ENCODE measurements at regions of chr15 and their contacts with region 1.

Region 1: DNA sequence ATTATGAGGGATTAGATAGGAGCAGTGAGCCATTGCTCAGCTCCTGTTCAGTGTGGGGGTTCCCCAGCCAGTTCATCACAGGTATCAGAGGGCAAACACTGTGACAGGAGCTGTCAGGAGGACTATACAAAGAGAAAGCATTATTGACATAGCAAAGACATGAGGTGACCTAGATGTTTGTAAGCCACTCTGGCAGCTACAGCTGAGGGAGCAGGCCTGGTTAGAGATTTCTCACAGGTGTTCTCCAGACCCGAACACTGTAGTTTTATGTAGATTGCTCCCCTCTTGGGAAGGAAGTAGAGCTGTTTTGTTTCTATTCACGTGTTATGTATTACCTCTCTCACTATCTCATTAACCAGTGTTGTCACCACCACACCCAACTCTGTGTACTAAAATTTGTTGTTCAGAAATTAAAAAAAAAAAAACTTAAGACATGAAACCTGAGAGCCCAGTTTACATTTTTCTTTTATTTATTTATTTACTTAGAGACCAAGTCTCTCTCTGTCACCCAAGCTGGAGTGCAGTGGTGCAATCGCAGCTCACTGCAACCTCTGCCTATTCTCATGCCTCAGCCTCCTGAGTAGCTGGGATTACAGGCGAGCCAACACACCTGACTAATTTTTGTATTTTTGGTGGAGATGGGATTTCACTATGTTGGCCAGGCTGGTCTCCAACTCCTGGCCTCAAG is 123.7 kb downstream of the RBPMS2 start:
- DNase-seq: no peak
- ATAC-seq: peak; percentile 56 to 82 (median 80)
- H3K4me3 ChIP-seq: no peak overlapping the region
- H3K27ac ChIP-seq: peak overlapping the region in 2 of 4 donors; percentile 22 to 47
- H3K4me1 ChIP-seq: peaks cover 0 to 15% (median 12%) of the 10 kb centered on the region in 3 donors
- H3K27me3 ChIP-seq: no peaks in the 10 kb centered on the region
- CTCF ChIP-seq: no peak

Region 2: GRCh38 chr15:64430000-64430735 is 221.5 kb before region 1 on chr15:
- intact Hi-C with region 1: loop called in 1 of 3 experiments (anchors 10 kb)
- DNase-seq: no peak
- ATAC-seq: peak in 3 of 4 donors; percentile 30 to 52 (median 44)
- H3K4me3 ChIP-seq: no peak overlapping the region
- H3K27ac ChIP-seq: no peak overlapping the region
- H3K4me1 ChIP-seq: peaks cover 0 to 9% (median 0%) of the 10 kb centered on the region in 3 donors
- H3K27me3 ChIP-seq: no peaks in the 10 kb centered on the region
- CTCF ChIP-seq: no peak

Measured in pancreas (tissue), 10 donors.